CD4-positive, alpha-beta memory T cell (primary cell): ENCODE measurements at regions of chrX and their contacts with region 1.

Region 1: GRCh38 chrX:154918060-154918483 is 31.9 kb downstream of the F8A1 start:
- DNase-seq: peak in 4 of 5 donors; percentile 31 to 37 (median 34)
- H3K4me3 ChIP-seq: no peak overlapping the region
- H3K4me3 Mint-ChIP-seq: peak overlapping the region; percentile 36 to 76 (median 64)
- H3K27ac ChIP-seq: no peak overlapping the region
- H3K27ac Mint-ChIP-seq: no peak overlapping the region
- H3K4me1 ChIP-seq: peaks cover 4% of the 10 kb centered on the region
- H3K4me1 Mint-ChIP-seq: peaks cover 0 to 5% (median 0%) of the 10 kb centered on the region in 4 donors
- H3K27me3 ChIP-seq: no peaks in the 10 kb centered on the region
- H3K27me3 Mint-ChIP-seq: peaks cover 5 to 6% of the 10 kb centered on the region in 2 donors

Region 2: GRCh38 chrX:155009994-155010472 is 92.0 kb after region 1 on chrX:
- CTCF ChIA-PET with region 1: no interaction called
- POLR2A ChIA-PET with region 1: no interaction called
- intact Hi-C with region 1: no loop called
- DNase-seq: no peak
- H3K4me3 ChIP-seq: no peak overlapping the region
- H3K4me3 Mint-ChIP-seq: no peak overlapping the region
- H3K27ac ChIP-seq: no peak overlapping the region
- H3K27ac Mint-ChIP-seq: no peak overlapping the region
- H3K4me1 ChIP-seq: no peaks in the 10 kb centered on the region
- H3K4me1 Mint-ChIP-seq: no peaks in the 10 kb centered on the region
- H3K27me3 ChIP-seq: no peaks in the 10 kb centered on the region
- H3K27me3 Mint-ChIP-seq: peaks cover 1 to 2% of the 10 kb centered on the region in 2 donors

Region 3: DNA sequence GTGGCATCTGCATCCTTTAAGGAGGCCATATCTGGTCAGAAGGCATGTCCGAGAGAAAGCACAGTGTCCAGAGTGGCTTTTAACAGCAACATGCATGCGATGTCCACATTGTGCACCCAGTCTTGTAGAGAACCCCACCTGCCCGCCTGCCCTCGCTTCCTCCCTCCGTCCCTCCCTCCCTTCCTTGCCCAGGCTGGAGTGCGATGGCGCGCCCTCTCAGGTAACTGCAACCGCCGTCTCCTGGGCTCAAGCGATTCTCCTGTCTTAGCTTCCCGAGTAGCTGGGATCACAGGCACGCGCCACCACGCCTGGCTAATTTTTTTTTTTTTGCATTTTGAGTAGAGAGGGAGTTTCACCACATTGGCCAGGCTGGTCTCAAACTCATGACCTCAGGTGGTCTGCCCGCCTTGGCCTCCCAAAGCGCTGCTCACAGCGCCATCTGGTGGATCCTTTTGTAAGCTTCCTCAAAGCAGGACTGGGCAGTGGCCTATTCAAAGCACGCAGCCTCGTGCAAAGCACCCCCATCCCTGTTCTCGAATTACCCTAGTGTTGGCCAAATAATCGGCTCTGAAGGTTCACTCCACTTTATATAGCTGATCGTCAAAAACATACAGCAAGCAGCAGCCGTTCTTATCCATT is 168.2 kb after region 1 on chrX:
- CTCF ChIA-PET with region 1: interaction called, 18 read pairs
- POLR2A ChIA-PET with region 1: no interaction called
- intact Hi-C with region 1: no loop called
- DNase-seq: peak; percentile 15 to 34 (median 30)
- H3K4me3 ChIP-seq: no peak overlapping the region
- H3K4me3 Mint-ChIP-seq: no peak overlapping the region
- H3K27ac ChIP-seq: no peak overlapping the region
- H3K27ac Mint-ChIP-seq: peak overlapping the region in 2 of 7 donors; percentile 30 to 65
- H3K4me1 ChIP-seq: no peaks in the 10 kb centered on the region
- H3K4me1 Mint-ChIP-seq: peaks cover 0 to 6% (median 0%) of the 10 kb centered on the region in 4 donors
- H3K27me3 ChIP-seq: no peaks in the 10 kb centered on the region
- H3K27me3 Mint-ChIP-seq: no peaks in the 10 kb centered on the region